Naive thymus-derived CD8-positive, alpha-beta T cell (primary cell): ENCODE measurements at regions of chr9 and their contacts with region 1.

Region 1: DNA sequence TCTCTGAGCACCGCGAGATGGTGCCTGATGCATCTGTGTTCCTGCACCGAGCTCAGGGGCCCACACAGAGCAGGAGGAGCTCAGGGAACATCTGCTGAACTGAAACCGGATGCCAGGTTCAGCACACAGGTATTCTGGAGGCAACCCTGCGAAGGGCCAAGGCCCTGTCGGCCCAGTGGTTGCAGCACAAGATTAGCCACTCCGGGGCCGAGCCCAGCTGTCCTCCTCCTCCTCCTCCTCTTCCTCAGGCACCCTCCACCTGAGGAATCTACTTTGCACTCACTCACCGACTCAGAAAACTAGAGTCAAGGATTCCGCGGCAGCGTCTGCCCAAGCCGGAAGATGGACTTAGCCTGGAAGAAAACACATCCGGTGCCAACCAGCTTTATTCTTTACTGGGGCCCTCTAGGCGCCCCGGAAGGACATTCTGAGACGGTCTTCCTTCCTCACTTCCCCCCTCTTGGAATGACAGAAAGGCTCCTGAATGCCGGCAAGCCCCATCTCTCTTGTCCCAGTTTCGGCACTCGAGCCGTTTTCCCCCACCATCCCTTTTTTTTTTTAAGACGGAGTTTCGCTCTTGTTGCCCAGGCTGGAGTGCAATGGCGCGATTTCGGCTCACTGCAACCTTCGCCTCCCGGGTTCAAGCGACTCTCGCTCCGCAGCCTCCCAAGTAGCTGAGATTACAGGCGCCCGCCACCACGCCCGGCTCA is at the start of gene ZBTB6:
- DNase-seq: peak; percentile 49 to 85 (median 76)
- ATAC-seq: peak; percentile 95 to 98
- H3K4me3 Mint-ChIP-seq: peak within 1 kb of the TSS; percentile 92 to 100 (median 98)
- H3K27ac Mint-ChIP-seq: peak within 1 kb of the TSS; percentile 94 to 99 (median 99)
- H3K4me1 Mint-ChIP-seq: peaks cover 14 to 36% (median 28%) of the 10 kb centered on the region in 4 donors
- H3K27me3 Mint-ChIP-seq: no peaks in the 10 kb centered on the region
- polyA plus RNA-seq, gene ZBTB6: 2.0 to 4.4 (median 2.1) TPM

Region 2: DNA sequence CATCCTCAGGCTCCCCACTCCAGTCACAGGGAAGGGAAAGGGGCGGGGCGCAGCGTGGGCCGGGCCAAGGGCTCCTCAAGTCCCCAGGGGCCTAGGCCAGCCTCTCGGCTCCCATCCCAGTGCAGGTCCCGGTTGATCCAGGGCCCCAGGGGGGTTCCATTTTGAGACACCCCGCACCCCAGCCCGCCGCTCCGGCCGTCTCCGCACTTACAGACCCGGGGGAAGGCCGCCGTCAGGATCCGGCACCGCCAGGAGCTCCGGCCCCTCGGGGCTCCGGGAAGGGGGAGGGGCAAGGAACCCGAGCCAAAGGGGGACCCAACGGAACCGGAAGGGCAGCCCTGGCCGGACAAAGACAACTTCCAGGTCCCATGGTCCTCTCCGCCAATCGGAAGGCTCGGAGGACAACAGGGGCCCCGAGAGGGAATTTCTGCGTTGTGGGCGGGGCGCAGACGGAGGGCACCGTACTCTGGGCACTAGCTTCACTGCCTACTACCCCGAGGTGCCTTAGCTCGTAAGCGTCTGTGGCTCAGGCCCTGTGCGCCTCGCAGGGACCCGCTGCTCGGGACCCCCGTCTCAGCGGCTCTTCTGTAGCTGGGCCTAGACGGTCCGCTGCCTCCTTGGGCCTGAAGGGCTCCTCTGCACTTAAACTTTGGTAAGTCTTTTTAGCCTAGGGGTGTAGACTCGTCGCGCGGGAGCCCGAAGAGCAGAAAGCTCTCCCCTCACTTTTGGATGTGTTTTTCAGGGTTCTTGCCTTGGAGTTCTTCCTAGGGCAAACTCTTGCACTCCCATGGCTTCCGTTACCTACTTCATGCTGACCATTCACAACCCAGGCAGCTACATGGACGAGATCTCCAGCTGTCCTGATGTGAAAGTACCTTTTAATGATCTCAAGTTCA is 18.4 kb after region 1 on chr9 and contains the start of gene ZBTB26:
- POLR2A ChIA-PET with region 1: interaction called, 38 read pairs
- DNase-seq: peak; percentile 78 to 93 (median 86)
- ATAC-seq: peak; percentile 97 to 98
- H3K4me3 Mint-ChIP-seq: peak within 1 kb of the TSS in 1 of 10 donors; percentile 97
- H3K27ac Mint-ChIP-seq: peak within 1 kb of the TSS in 6 of 10 donors; percentile 95 to 98 (median 96)
- H3K4me1 Mint-ChIP-seq: peaks cover 10 to 35% (median 19%) of the 10 kb centered on the region in 4 donors
- H3K27me3 Mint-ChIP-seq: no peaks in the 10 kb centered on the region
- polyA plus RNA-seq, gene ZBTB26: 0.57 to 1.3 (median 0.66) TPM

Region 3: DNA sequence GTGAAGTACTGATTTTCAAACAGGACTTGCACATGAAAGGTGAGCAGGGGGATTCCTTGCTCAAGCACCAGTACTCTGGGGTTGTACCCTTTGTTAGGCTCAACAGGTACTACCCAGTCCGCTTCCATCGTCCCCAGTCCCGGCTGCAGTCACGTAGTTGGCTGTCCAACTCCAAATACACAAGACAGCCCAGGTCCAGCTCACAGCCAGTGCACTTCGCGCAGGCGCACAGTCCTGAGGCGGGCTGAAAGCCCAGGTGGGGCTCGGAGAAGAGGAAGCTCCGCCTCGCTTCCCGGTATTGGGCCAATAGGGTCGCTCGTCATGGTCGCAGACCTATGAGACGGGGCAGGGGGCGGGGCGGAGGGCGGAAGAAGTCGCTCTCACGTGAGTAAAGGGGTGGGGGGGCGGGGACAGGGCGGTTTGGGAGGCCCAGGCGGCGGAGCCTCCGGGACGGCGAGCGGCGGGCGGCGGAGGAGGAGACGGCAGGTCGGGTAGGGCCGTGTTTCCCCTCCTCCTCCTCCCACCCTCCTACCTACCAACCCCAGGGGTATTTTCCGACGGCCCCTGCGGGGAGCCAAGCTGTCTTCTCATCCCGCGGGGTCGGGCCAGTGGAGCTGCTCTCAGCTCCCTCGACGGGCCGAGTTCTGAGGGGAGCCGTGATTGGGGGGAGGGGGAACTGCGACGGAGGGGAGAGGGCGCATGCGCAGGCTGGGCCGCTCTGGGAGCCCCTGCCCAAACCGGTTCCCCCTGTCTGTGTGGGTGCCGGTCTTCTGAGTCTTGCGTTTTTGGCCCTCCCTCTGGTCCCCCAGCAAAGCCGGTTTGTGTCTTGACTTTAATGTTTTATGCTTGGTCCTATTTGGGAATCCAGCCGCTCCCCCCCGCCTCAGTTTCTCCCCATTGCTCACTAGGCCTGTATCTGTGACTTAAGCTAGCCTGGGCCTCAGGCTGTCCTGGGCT is 27.8 kb after region 1 on chr9 and contains the start of gene RABGAP1:
- POLR2A ChIA-PET with region 1: interaction called, 28 read pairs
- DNase-seq: peak; percentile 89 to 99 (median 96)
- ATAC-seq: peak; percentile 97 to 98
- H3K4me3 Mint-ChIP-seq: peak within 1 kb of the TSS; percentile 90 to 97 (median 94)
- H3K27ac Mint-ChIP-seq: peak within 1 kb of the TSS; percentile 79 to 97 (median 94)
- H3K4me1 Mint-ChIP-seq: peaks cover 11 to 51% (median 39%) of the 10 kb centered on the region in 4 donors
- H3K27me3 Mint-ChIP-seq: no peaks in the 10 kb centered on the region
- polyA plus RNA-seq, gene RABGAP1: 21.9 to 26.6 (median 23.8) TPM